Common myeloid progenitor, CD34-positive (primary cell): ENCODE measurements at regions of chr1 and their contacts with region 1.

Region 1: DNA sequence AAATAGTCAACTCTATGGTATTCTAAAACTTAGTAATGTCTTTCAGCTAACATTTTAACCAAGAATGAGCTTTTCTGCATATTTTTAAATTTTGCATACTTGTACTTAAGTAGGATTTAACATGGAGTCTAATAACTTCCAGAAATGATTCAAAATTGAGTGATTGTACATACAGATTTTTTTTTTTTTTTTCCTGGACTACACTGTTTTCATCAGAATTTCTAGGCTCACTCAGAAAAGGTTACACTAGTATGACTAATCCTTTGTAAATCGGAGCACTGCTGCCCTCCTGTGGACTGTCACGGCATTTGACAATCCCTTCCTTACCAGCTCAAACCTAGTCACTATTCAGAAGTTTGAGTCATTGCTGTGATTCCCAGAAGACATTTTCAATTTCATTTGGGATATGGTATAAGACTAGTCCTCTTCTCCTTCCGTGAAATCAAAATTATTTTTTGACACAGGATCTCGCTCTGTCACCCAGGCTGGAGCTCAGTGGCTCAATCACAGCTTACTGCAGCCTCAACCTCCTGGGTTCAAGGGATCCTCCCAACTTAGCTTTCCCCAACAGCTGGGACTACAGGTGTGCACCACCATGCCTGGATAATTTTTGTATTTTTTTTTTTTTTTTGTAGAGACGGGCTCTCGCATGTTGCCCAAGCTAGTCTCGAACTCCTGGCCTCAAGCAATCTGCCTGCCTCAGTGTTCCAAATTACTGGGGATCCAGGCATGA is 45.5 kb downstream of the CD46 start:
- DNase-seq: peak; percentile 74 to 82 (median 77)
- H3K4me3 ChIP-seq: no peak overlapping the region
- H3K27ac ChIP-seq: no peak overlapping the region
- H3K4me1 ChIP-seq: peaks cover 26 to 55% (median 44%) of the 10 kb centered on the region in 4 experiments
- H3K27me3 ChIP-seq: no peaks in the 10 kb centered on the region

Region 2: GRCh38 chr1:207811920-207812720 is 14.7 kb after region 1 on chr1:
- CTCF ChIA-PET with region 1: interaction called, 11 read pairs
- POLR2A ChIA-PET with region 1: no interaction called
- DNase-seq: no peak
- H3K4me3 ChIP-seq: no peak overlapping the region
- H3K27ac ChIP-seq: no peak overlapping the region
- H3K4me1 ChIP-seq: peaks cover 0 to 37% (median 26%) of the 10 kb centered on the region in 4 experiments
- H3K27me3 ChIP-seq: no peaks in the 10 kb centered on the region

Region 3: DNA sequence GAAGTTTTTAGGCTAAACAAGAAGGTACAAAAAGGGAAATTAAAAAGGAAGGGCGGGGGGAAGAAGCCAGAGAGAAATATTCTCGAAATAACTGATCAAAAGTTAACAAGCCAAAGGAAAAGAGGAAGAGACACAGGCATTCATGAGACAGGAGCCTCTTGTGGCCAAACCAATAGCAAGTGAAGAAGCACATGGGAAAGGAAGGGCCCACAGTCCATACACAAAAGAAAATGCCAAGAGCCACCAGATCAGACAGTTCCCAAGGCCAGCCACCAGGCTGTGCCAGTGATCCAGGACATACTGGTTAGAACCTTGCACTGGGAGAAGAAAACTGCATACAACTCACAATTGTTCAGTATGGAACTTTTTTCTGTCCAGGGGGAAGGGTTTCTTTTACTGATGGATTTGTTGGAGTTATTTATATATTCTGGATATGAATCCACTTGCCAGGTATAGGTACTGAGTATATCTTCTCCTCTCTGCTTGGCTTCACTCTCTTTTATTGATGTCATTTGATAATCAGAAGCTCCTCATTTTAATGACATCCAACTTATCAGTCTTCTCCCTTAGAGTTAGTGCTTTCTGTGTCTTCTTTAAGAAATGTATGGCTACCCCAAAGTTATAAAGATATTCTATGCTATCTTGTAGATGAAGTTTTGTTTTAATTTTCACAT is 31.2 kb after region 1 on chr1:
- CTCF ChIA-PET with region 1: interaction called, 12 read pairs
- POLR2A ChIA-PET with region 1: interaction called, 3 read pairs
- DNase-seq: peak; percentile 96
- H3K4me3 ChIP-seq: peak overlapping the region in 1 of 7 experiments; percentile 30
- H3K27ac ChIP-seq: peak overlapping the region in 1 of 2 experiments; percentile 37
- H3K4me1 ChIP-seq: peaks cover 54 to 92% (median 87%) of the 10 kb centered on the region in 4 experiments
- H3K27me3 ChIP-seq: no peaks in the 10 kb centered on the region

Region 4: DNA sequence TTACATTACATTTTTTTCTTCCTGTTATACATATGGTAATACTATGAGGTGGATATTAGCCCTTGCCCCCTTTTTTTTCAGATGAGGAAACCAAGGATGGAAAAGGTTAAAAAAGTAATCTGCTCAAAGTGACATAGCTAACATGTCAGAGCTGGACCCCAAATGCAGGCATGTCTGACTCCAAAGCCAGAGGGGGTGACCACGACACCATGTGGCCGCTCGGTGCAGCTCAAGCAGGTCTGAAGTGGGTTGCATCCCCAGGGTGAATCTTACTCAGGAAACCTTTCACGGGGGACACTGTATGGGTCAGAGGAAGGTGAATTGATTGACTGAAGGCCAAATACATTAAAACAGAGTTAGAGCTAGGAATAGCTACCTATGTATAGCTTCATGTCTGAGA is 78.7 kb after region 1 on chr1:
- CTCF ChIA-PET with region 1: interaction called, 10 read pairs
- POLR2A ChIA-PET with region 1: interaction called, 3 read pairs
- DNase-seq: no peak
- H3K4me3 ChIP-seq: no peak overlapping the region
- H3K27ac ChIP-seq: no peak overlapping the region
- H3K4me1 ChIP-seq: peaks cover 26 to 60% (median 46%) of the 10 kb centered on the region in 4 experiments
- H3K27me3 ChIP-seq: no peaks in the 10 kb centered on the region